Activated CD4-positive, alpha-beta T cell treated with anti-CD3 and anti-CD28 coated beads for 36 hours (primary cell): ENCODE measurements at regions of chr13 and their contacts with region 1.

Region 1: GRCh38 chr13:32586080-32586900 is at the start of gene PDS5B:
- DNase-seq: peak; percentile 96
- ATAC-seq: peak; percentile 93
- H3K4me3 Mint-ChIP-seq: peak within 1 kb of the TSS; percentile 92
- H3K27ac Mint-ChIP-seq: peak within 1 kb of the TSS; percentile 93
- H3K4me1 Mint-ChIP-seq: peaks cover 36% of the 10 kb centered on the region
- H3K27me3 Mint-ChIP-seq: peaks cover 3% of the 10 kb centered on the region
- total RNA-seq, gene PDS5B: 51.3 to 75.7 TPM

Region 2: GRCh38 chr13:32315238-32316027 is 270.9 kb before region 1 on chr13 and contains the starts of genes BRCA2 and ZAR1L:
- CTCF ChIA-PET with region 1: interaction called, 5 read pairs
- POLR2A ChIA-PET with region 1: interaction called, 5 read pairs
- intact Hi-C with region 1: loop called (anchors 1 to 10 kb)
- DNase-seq: peak; percentile 94
- ATAC-seq: peak; percentile 95
- H3K4me3 Mint-ChIP-seq: peak within 1 kb of the TSS; percentile 92
- H3K27ac Mint-ChIP-seq: peak within 1 kb of the TSS; percentile 100
- H3K4me1 Mint-ChIP-seq: peaks cover 9% of the 10 kb centered on the region
- H3K27me3 Mint-ChIP-seq: no peaks in the 10 kb centered on the region
- total RNA-seq, gene BRCA2: 34.1 to 49.0 TPM
- total RNA-seq, gene ZAR1L: not detected

Region 3: GRCh38 chr13:32538621-32539246 is 47.6 kb before region 1 on chr13 and contains the start of gene N4BP2L2:
- CTCF ChIA-PET with region 1: no interaction called
- POLR2A ChIA-PET with region 1: interaction called, 5 read pairs
- intact Hi-C with region 1: loop called (anchors 1 kb)
- DNase-seq: peak; percentile 94
- ATAC-seq: peak; percentile 96
- H3K4me3 Mint-ChIP-seq: peak within 1 kb of the TSS; percentile 93
- H3K27ac Mint-ChIP-seq: peak within 1 kb of the TSS; percentile 98
- H3K4me1 Mint-ChIP-seq: peaks cover 39% of the 10 kb centered on the region
- H3K27me3 Mint-ChIP-seq: peaks cover 4% of the 10 kb centered on the region
- total RNA-seq, gene N4BP2L2: 95.1 to 105 TPM

Region 4: GRCh38 chr13:32669030-32669646 is 82.8 kb after region 1 on chr13:
- CTCF ChIA-PET with region 1: interaction called, 22 read pairs
- POLR2A ChIA-PET with region 1: interaction called, 4 read pairs
- intact Hi-C with region 1: loop called (anchors 1 kb)
- DNase-seq: peak; percentile 12
- ATAC-seq: peak; percentile 60
- H3K4me3 Mint-ChIP-seq: no peak overlapping the region
- H3K27ac Mint-ChIP-seq: no peak overlapping the region
- H3K4me1 Mint-ChIP-seq: peaks cover 9% of the 10 kb centered on the region
- H3K27me3 Mint-ChIP-seq: no peaks in the 10 kb centered on the region

Region 5: GRCh38 chr13:32911506-32911905 is 325.2 kb after region 1 on chr13:
- CTCF ChIA-PET with region 1: interaction called, 3 read pairs
- POLR2A ChIA-PET with region 1: no interaction called
- intact Hi-C with region 1: loop called (anchors 1 kb)
- DNase-seq: peak; percentile 46
- ATAC-seq: peak; percentile 91
- H3K4me3 Mint-ChIP-seq: no peak overlapping the region
- H3K27ac Mint-ChIP-seq: no peak overlapping the region
- H3K4me1 Mint-ChIP-seq: peaks cover 3% of the 10 kb centered on the region
- H3K27me3 Mint-ChIP-seq: peaks cover 9% of the 10 kb centered on the region

Region 6: GRCh38 chr13:33610471-33611015 is 1024.3 kb after region 1 on chr13:
- CTCF ChIA-PET with region 1: no interaction called
- POLR2A ChIA-PET with region 1: no interaction called
- intact Hi-C with region 1: loop called in 1 of 2 experiments (anchors 2 kb)
- DNase-seq: peak; percentile 77
- ATAC-seq: peak; percentile 54
- H3K4me3 Mint-ChIP-seq: peak overlapping the region; percentile 69
- H3K27ac Mint-ChIP-seq: peak overlapping the region; percentile 98
- H3K4me1 Mint-ChIP-seq: peaks cover 50% of the 10 kb centered on the region
- H3K27me3 Mint-ChIP-seq: peaks cover 2% of the 10 kb centered on the region

Region 7: GRCh38 chr13:33817901-33818706 is 1231.8 kb after region 1 on chr13 and contains the start of gene RFC3:
- CTCF ChIA-PET with region 1: no interaction called
- POLR2A ChIA-PET with region 1: no interaction called
- intact Hi-C with region 1: loop called in 1 of 2 experiments (anchors 5 kb)
- DNase-seq: peak; percentile 96
- ATAC-seq: peak; percentile 97
- H3K4me3 Mint-ChIP-seq: peak within 1 kb of the TSS; percentile 96
- H3K27ac Mint-ChIP-seq: peak within 1 kb of the TSS; percentile 97
- H3K4me1 Mint-ChIP-seq: peaks cover 29% of the 10 kb centered on the region
- H3K27me3 Mint-ChIP-seq: no peaks in the 10 kb centered on the region
- total RNA-seq, gene RFC3: 64.6 to 66.4 TPM